Endothelial cell of umbilical vein (primary cell): ENCODE measurements at regions of chr2 and their contacts with region 1.

Region 1: GRCh38 chr2:200787348-200788120 is 24.2 kb upstream of the BZW1 start:
- DNase-seq: peak; percentile 95
- H3K4me3 ChIP-seq: peak overlapping the region in 1 of 3 experiments; percentile 63
- H3K27ac ChIP-seq: peak overlapping the region; percentile 99
- H3K4me1 ChIP-seq: peaks cover 43% of the 10 kb centered on the region
- H3K27me3 ChIP-seq: no peaks in the 10 kb centered on the region
- CTCF ChIP-seq: no peak
- POLR2A ChIP-seq: peak; percentile 17

Region 2: DNA sequence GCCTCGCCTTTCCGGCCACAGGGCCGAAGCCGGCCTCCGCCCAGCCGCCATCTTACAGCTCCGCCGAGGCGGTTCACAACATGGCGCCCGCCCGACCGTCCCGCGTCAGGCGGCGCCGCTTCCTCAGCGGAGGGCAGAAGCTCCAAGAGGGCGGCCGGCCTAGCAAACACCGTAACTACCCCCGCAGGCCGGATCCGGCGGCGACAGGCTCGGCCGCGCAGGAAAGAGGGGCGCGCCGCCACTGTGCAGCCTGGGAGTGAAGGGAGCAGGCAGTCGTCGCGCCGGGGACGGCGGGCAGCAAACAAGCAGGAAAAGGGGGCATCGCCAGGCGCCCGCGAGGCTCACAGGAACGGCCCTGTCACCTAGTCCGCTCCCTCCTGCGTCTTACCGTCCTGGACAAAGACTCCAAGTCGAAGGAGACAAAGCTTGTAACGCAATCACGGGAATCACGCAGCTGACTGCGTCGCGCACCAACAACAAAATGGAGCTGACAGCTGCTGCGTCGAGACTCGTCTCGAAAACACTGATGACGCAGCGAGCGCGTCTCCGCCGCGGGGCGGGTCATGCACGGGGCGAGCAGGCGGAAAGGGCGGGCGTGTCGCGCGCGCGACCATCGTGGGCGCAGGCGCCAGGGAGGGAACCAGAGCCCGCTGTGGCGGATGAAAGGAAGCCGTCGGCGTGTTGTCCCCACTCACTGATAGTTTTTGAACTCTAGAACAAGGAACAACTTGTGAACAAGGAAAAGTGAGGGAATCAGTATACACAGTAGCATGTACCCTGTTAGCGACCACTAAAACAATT is 76.8 kb after region 1 on chr2 and contains the start of gene CLK1:
- CTCF ChIA-PET with region 1: no interaction called
- POLR2A ChIA-PET with region 1: no interaction called
- dilution Hi-C with region 1: no loop called
- intact Hi-C with region 1: loop called (anchors 1 kb)
- DNase-seq: peak; percentile 95
- H3K4me3 ChIP-seq: peak within 1 kb of the TSS; percentile 90 to 99 (median 91)
- H3K27ac ChIP-seq: peak within 1 kb of the TSS; percentile 88
- H3K4me1 ChIP-seq: peaks cover 26% of the 10 kb centered on the region
- H3K27me3 ChIP-seq: no peaks in the 10 kb centered on the region
- CTCF ChIP-seq: no peak
- POLR2A ChIP-seq: peak; percentile 97
- total RNA-seq, gene CLK1: 79.7 and 92.4 TPM in 2 replicates

Region 3: DNA sequence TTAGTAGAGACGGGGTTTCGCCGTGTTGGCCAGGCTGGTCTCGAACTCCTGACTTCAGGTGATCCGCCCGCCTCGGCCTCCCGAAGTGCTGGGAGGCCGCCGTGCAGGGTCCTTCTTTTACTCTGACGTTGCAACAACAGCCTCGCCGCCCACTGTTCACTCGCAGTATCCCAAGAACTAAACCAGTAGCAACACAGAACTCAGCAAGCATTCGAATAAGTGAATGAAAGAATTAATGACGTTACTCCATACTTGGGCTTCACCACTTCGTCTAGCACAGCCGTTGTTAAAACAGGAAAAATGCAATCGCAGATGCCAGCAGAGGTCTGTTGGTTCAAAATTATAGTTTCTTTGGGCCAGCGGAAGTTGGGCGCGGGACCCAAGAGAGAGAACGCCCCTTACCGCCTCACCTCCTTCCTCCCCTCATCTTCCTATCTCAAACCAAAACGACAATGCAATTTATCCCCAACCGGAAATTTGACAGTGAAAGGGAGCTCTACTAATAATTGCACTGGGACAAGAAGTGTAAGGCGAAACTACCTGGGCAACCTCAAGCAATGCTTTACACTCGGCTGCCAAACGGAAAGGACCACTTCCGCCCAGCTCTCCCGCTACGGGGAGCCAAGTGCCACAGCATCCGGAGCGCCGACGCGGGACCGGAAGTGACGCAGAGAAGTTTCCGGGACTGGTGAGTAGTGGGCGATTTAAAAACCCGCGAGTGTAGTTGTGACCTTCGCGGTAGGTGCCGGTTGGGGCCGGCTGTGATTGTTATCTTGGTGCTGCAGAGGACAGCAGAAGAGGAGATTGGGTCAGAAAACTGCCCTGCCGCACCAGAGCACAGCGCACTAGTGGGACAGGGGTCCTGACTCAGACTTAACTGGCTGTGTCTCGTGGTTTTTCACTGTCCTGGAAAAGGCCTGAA is 101.4 kb after region 1 on chr2 and contains the starts of genes NIF3L1 and PPIL3:
- CTCF ChIA-PET with region 1: no interaction called
- POLR2A ChIA-PET with region 1: no interaction called
- dilution Hi-C with region 1: no loop called
- intact Hi-C with region 1: loop called (anchors 1 kb)
- DNase-seq: peak; percentile 96
- H3K4me3 ChIP-seq: peak within 1 kb of the TSS; percentile 24 to 76 (median 63)
- H3K27ac ChIP-seq: peak within 1 kb of the TSS; percentile 91
- H3K4me1 ChIP-seq: peaks cover 13% of the 10 kb centered on the region
- H3K27me3 ChIP-seq: no peaks in the 10 kb centered on the region
- CTCF ChIP-seq: peak in 1 of 2 donors; percentile 11
- POLR2A ChIP-seq: peak; percentile 82
- total RNA-seq, gene NIF3L1: 14.9 and 16.3 TPM in 2 replicates
- total RNA-seq, gene PPIL3: 25.0 and 28.7 TPM in 2 replicates